PC-3 (cell line): ENCODE measurements at regions of chr16 and their contacts with region 1.

Region 1: DNA sequence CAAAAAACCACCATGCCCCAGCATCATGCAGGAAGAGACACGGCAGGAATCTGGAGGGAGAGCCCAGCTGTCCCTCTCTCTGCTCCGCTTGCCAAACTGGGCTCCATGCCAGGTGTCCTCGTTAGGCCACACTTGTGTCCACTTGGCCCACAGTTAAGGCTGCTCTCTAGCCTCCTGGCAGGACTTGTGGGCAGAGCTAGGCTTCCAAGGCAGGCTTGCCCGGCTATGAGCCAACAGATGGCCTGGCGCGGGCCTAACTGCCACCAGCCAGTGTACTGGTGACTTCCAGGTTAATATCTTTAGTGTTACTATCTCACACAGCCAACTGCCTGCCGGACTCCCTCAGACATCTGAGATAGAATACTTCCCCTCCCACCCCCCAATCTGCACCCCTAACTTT is 10.6 kb downstream of the ATP6V0D1 start:
- DNase-seq: no peak
- ATAC-seq: no peak
- H3K4me3 ChIP-seq: no peak overlapping the region
- H3K27ac ChIP-seq: no peak overlapping the region
- H3K4me1 ChIP-seq: peaks cover 4% of the 10 kb centered on the region
- H3K27me3 ChIP-seq: no peaks in the 10 kb centered on the region
- CTCF ChIP-seq: no peak

Region 2: DNA sequence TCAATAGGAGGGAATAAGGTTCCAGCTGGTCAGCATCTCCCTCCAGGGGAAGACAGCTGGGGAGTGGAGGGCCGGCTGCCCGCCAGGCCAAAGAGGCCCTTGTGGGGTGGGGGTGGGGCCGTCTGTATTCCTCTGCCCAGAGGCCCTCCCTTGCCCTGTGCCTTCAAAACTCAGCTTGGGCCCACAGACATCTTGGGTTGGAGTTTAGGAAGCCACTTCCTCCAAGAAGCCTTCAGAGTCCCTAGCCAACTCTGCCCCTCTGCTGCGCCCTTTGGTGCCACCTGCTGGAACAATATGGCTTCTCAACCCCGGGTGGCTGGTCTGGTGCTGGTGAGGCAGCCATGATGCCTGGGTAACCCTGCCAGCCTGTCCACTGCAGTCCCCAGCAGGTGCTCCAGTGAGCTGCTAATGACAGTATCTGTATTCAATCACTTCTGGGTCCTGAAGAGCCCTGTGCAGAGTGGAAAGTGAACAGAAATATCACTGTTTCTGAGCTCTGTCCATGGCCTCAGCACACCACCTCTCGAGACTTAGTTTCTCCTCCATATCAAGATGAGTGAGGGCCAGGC is 22.8 kb before region 1 on chr16:
- CTCF ChIA-PET with region 1: no interaction called
- POLR2A ChIA-PET with region 1: no interaction called
- intact Hi-C with region 1: no loop called
- DNase-seq: peak; percentile 46
- ATAC-seq: peak; percentile 48; the same call in 1 of the 2 replicates
- H3K4me3 ChIP-seq: no peak overlapping the region
- H3K27ac ChIP-seq: no peak overlapping the region
- H3K4me1 ChIP-seq: no peaks in the 10 kb centered on the region
- H3K27me3 ChIP-seq: no peaks in the 10 kb centered on the region
- CTCF ChIP-seq: peak; percentile 57

Region 3: DNA sequence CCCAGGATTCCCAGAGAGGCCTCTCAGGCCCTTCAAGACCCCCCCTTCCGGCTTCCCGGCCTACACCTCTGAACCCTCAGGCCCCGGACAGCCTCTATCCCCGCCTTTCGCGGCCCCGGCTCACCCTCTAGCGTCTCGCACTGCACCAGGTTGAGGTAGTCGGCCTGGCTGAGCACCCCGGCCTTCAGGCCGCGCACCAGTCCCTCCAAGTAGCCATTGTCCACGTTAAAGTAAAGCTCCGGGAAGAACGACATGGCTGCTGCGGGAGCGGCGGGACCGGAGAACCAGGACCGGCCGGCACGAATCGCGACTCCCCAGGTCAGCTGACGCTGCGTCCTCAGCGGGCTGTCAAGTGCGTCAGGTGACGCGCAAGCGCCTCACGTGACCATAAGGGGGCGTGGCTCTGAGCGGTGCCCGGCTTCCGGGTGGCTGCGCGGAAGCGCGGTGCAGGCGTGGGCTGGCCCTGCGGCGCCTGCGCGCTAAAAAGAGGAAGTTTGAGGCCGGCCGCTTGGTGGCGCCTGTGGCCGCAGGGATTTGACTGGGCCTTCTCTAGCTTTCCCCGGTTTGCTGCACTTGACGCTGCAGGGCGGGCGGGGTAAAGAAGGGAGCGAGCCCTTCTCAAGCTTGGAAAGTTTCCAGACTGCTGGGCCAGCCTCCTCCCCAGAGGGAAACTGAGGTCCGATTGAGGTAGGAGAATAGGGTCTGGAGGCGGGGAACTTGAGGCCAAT is 10.6 kb after region 1 on chr16 and contains the start of gene ATP6V0D1:
- CTCF ChIA-PET with region 1: no interaction called
- POLR2A ChIA-PET with region 1: interaction called, 14 read pairs
- intact Hi-C with region 1: no loop called
- DNase-seq: peak; percentile 97
- ATAC-seq: peak; percentile 93
- H3K4me3 ChIP-seq: peak within 1 kb of the TSS; percentile 90
- H3K27ac ChIP-seq: peak within 1 kb of the TSS; percentile 37
- H3K4me1 ChIP-seq: peaks cover 7% of the 10 kb centered on the region; the same call in 1 of the 2 replicates
- H3K27me3 ChIP-seq: no peaks in the 10 kb centered on the region
- CTCF ChIP-seq: peak; percentile 71
- total RNA-seq, gene ATP6V0D1: 65.5 and 76.6 TPM in 2 replicates